Mammary epithelial cell (primary cell): ENCODE measurements at regions of chr9 and their contacts with region 1.

Region 1: GRCh38 chr9:97386733-97387503 is 25.0 kb upstream of the TDRD7 start:
- DNase-seq: peak; percentile 66
- H3K4me3 ChIP-seq: no peak overlapping the region
- H3K27ac ChIP-seq: no peak overlapping the region
- H3K4me1 ChIP-seq: no peaks in the 10 kb centered on the region
- H3K27me3 ChIP-seq: peaks cover 3% of the 10 kb centered on the region
- CTCF ChIP-seq: peak; percentile 99

Region 2: DNA sequence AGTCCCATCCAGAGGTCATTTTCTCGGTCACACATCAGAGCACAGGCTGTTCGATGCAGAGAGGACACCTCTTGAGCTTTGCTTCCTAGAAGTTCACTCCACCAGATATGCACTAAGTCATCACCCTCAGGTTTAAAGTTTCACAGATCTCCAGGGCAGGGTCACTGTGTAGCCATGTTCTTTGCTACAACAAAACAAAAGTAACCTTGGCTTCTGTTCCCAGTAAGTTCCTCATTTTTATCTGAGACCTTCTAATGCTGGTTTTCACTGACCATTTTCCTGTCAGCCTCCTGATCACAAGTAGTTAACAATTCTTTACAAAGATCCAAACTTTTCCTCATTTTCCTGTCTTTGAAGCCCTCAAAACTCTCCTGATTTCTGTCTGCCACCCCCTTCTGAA is 250.5 kb before region 1 on chr9:
- CTCF ChIA-PET with region 1: no interaction called
- dilution Hi-C with region 1: no loop called
- in situ Hi-C with region 1: no loop called
- intact Hi-C with region 1: loop called (anchors 10 kb)
- DNase-seq: no peak
- H3K4me3 ChIP-seq: no peak overlapping the region
- H3K27ac ChIP-seq: no peak overlapping the region
- H3K4me1 ChIP-seq: no peaks in the 10 kb centered on the region
- H3K27me3 ChIP-seq: no peaks in the 10 kb centered on the region
- CTCF ChIP-seq: no peak

Region 3: GRCh38 chr9:97368964-97369363 is 18.0 kb before region 1 on chr9:
- CTCF ChIA-PET with region 1: interaction called, 11 read pairs
- dilution Hi-C with region 1: no loop called
- in situ Hi-C with region 1: no loop called
- intact Hi-C with region 1: no loop called
- DNase-seq: no peak
- H3K4me3 ChIP-seq: no peak overlapping the region
- H3K27ac ChIP-seq: no peak overlapping the region
- H3K4me1 ChIP-seq: peaks cover 6% of the 10 kb centered on the region
- H3K27me3 ChIP-seq: no peaks in the 10 kb centered on the region
- CTCF ChIP-seq: no peak

Region 4: DNA sequence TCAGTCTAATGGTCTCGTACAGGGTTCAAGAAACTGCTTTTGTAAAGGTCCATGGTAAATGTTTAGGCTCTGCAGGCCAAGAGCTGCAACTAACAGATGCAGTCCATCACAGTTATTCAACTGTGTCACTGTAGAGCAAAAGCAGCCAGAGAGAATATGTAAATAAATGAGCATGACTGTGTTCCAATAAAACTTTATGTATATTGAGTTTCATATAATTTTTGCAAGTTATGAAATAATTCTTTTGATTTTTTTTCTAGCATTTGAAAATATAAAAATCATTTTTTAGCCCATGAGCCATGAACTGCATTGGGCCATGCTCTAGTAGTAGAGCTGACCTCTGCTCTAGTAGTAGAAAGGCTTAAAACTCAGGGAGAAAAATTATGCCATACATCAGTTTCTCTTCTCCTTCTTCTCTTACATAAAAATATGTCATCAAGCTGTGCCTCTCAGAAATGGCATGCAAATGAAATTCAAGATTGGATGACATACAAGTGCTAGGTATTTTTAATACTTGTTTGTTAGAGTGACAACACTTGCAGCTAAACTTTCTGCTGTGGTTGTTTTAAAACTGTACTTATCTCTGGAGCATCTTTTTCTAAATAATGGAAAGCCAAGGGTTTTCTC is 72.3 kb after region 1 on chr9:
- CTCF ChIA-PET with region 1: no interaction called
- dilution Hi-C with region 1: no loop called
- in situ Hi-C with region 1: no loop called
- intact Hi-C with region 1: no loop called
- DNase-seq: no peak
- H3K4me3 ChIP-seq: no peak overlapping the region
- H3K27ac ChIP-seq: no peak overlapping the region
- H3K4me1 ChIP-seq: no peaks in the 10 kb centered on the region
- H3K27me3 ChIP-seq: no peaks in the 10 kb centered on the region
- CTCF ChIP-seq: no peak